Heart right ventricle (tissue), 16 donors: ENCODE measurements at regions of chr11 and their contacts with region 1.

Region 1: DNA sequence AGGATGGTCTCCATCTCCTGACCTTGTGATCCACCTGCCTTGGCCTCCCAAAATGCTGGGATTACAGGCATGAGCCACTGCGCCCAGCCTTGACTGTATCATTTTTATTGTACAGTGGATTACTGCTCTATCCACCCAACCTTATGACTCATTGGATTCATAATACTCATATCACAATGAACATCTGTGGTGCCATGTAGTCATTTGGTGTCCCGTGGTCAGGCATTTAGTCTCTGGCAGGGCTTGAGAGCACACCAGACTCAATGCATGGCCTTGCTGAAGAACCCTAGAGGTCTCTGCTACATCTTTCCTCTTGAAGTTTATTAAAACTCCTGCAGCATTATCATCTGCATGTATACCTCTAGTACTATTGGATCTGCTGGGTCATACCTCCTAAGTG is 98.0 kb upstream of the LDLRAD3 start:
- DNase-seq: no peak
- ATAC-seq: no peak
- H3K4me3 ChIP-seq: no peak overlapping the region
- H3K27ac ChIP-seq: no peak overlapping the region
- H3K4me1 ChIP-seq: no peaks in the 10 kb centered on the region
- H3K27me3 ChIP-seq: peaks cover 0 to 8% (median 0%) of the 10 kb centered on the region in 7 donors
- CTCF ChIP-seq: no peak

Region 2: GRCh38 chr11:35711173-35711910 is 134.5 kb before region 1 on chr11:
- intact Hi-C with region 1: no loop called
- DNase-seq: no peak
- ATAC-seq: no peak
- H3K4me3 ChIP-seq: no peak overlapping the region
- H3K27ac ChIP-seq: no peak overlapping the region
- H3K4me1 ChIP-seq: peaks cover 0 to 25% (median 5%) of the 10 kb centered on the region in 9 donors
- H3K27me3 ChIP-seq: no peaks in the 10 kb centered on the region
- CTCF ChIP-seq: peak in 5 of 9 donors; percentile 15 to 27 (median 20)

Region 3: DNA sequence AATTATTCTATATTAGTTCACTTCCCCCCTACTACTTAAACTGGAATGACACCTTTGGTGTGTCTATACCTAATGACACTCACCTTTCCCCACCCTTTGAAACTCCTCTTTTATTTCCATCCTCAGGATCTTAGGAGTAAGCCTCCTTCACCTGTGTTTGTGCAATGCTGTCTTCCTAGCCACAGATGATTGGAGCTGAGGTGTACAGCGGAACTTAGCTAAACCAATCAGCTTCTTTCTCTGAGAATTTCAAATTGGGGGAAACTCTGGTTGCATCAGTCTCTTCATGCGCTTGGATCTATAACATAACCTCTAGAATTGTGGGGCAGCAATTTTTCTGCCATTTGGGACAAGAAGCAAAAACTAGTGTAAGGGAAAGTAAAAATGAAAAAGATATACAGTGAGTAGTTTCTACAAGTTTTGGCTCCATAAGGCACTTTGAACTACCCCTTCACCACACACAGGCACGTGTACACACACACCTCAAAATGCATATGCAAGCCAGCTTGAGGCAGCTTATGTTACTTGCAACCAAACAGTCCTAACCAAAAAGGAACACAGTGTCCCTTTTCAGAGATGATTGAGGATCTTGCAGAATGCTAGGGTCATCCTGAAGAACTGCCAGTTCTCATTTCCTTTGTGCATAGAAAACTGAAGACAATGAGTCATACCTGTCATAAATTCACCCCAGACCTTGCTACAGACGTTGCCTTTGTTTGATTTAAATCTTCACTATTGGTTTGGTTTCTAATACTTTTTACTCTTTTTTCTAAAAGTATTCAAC is 62.0 kb after region 1 on chr11:
- intact Hi-C with region 1: loop called in 1 of 10 experiments (anchors 10 kb)
- DNase-seq: no peak
- ATAC-seq: peak in 2 of 8 donors; percentile 63 to 68
- H3K4me3 ChIP-seq: no peak overlapping the region
- H3K27ac ChIP-seq: no peak overlapping the region
- H3K4me1 ChIP-seq: peaks cover 0 to 28% (median 0%) of the 10 kb centered on the region in 9 donors
- H3K27me3 ChIP-seq: no peaks in the 10 kb centered on the region
- CTCF ChIP-seq: no peak

Region 4: GRCh38 chr11:36034551-36035331 is 188.9 kb after region 1 on chr11:
- intact Hi-C with region 1: loop called in 1 of 10 experiments (anchors 10 kb)
- DNase-seq: no peak
- ATAC-seq: no peak
- H3K4me3 ChIP-seq: no peak overlapping the region
- H3K27ac ChIP-seq: no peak overlapping the region
- H3K4me1 ChIP-seq: peaks cover 0 to 28% (median 0%) of the 10 kb centered on the region in 9 donors
- H3K27me3 ChIP-seq: peaks cover 0 to 3% (median 0%) of the 10 kb centered on the region in 7 donors
- CTCF ChIP-seq: no peak